Activated naive CD4-positive, alpha-beta T cell treated with anti-CD3 and anti-CD28 coated beads for 36 hours (primary cell): ENCODE measurements at regions of chr5 and their contacts with region 1.

Region 1: GRCh38 chr5:134370871-134371833 is at the start of gene UBE2B:
- DNase-seq: peak; percentile 99
- H3K4me3 Mint-ChIP-seq: peak within 1 kb of the TSS; percentile 98
- H3K27ac Mint-ChIP-seq: peak within 1 kb of the TSS; percentile 99
- H3K4me1 Mint-ChIP-seq: peaks cover 58% of the 10 kb centered on the region
- H3K27me3 Mint-ChIP-seq: no peaks in the 10 kb centered on the region
- total RNA-seq, gene UBE2B: 116 to 129 TPM

Region 2: DNA sequence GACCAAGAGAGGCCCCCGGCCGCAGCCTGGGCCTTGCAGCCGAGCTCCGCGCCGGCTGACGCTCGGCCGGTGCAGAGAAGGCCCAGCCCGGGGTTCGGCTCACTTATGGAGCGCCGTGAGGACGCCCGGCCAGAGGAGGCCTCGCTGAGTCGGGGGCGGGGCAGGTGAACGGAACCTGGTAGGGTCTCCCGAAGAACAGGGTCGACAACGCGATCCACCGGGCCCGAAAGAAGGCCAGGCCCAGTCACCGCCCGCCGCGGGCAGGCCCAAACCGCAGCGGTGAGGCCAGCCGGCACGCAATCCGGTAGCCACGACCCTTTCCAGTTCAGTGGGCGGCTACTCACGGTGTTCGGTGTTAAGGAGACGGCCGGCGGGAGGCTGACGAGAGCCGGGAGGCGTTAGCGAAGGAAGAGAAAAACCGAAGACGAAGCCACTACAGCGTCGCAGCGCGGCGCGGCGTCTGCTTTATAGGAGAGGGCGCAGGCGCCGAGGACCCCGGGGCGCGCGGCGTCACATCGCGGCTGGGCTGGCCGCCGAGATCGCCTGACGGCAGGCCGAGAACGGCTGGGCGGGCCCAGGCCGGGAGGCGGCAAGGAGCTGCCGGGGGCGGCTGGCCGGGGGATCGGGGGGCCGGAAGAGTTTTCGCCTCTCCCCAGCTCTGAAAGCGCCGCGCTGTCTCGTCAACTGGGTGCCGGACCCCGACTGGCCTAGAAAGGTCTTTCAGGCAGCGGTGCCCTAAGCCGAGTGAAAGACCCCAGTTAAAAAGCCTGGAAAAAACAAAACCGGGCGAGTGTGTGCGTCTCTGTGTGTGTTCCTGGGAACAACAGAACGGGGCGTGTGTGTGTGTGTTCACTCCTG is 194.4 kb before region 1 on chr5 and contains the start of gene SKP1:
- CTCF ChIA-PET with region 1: no interaction called
- intact Hi-C with region 1: loop called (anchors 1 kb)
- DNase-seq: peak; percentile 83
- H3K4me3 Mint-ChIP-seq: peak within 1 kb of the TSS; percentile 96
- H3K27ac Mint-ChIP-seq: peak within 1 kb of the TSS; percentile 94
- H3K4me1 Mint-ChIP-seq: peaks cover 31% of the 10 kb centered on the region
- H3K27me3 Mint-ChIP-seq: no peaks in the 10 kb centered on the region
- total RNA-seq, gene SKP1: 307 to 309 TPM

Region 3: DNA sequence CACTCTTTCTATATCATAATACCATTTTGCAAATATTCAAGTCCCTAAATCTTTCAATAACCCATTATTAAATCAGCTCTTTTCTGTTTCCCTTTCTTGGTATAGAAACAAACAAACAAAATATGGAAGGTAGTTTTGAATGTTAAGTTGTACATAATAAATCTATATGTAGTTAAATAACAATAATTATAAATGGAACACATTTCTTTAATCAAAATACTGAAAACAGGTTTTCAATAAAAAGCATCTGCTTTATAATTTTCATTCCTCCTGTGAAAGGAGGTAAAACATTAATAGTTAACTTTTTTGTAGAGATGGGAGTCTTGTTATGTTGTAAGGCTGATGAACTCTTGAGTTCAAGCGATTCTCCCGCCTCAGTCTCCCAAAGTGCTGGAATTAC is 58.4 kb before region 1 on chr5:
- CTCF ChIA-PET with region 1: no interaction called
- intact Hi-C with region 1: no loop called
- DNase-seq: no peak
- H3K4me3 Mint-ChIP-seq: no peak overlapping the region
- H3K27ac Mint-ChIP-seq: no peak overlapping the region
- H3K4me1 Mint-ChIP-seq: peaks cover 6% of the 10 kb centered on the region
- H3K27me3 Mint-ChIP-seq: no peaks in the 10 kb centered on the region

Region 4: DNA sequence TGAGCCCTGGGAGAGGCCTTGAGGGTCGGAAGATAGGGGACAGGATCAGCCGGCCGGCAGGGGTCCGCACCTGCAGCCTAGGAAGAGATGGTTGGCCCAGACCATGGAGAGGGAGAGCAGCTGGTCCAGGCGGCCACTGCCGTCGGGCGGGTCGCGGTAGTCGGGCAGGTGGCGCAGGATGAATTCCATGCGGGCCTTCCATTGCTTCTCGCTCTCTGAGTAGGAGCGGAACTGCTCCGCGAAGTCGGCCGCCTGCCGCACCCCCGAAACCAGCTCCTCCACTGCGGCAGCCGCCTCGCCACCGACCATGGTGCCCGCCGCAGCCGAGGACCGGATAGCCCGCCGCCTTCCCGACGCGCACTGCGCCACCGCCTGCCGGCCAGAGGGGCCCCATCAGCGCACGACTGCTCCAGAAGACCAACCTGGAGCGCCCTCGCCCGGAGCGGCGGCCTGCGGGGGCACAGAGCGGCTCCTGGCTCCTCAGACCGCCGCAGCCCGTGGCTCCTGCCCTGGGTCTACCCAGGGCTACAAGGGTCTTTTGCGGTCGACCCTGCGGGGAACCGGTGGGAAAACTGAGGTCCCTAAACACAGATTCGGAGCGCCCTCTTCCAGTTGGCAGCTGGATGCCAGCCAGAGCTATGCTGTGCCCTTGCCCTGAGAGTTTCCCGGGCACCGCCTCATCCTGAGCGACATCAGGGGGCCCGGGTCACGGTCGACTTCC is 40.6 kb after region 1 on chr5 and contains the start of gene CDKN2AIPNL:
- CTCF ChIA-PET with region 1: interaction called, 8 read pairs
- intact Hi-C with region 1: loop called (anchors 1 kb)
- DNase-seq: peak; percentile 94
- H3K4me3 Mint-ChIP-seq: peak within 1 kb of the TSS; percentile 96
- H3K27ac Mint-ChIP-seq: peak within 1 kb of the TSS; percentile 88
- H3K4me1 Mint-ChIP-seq: peaks cover 34% of the 10 kb centered on the region
- H3K27me3 Mint-ChIP-seq: no peaks in the 10 kb centered on the region
- total RNA-seq, gene CDKN2AIPNL: 31.1 to 31.5 TPM

Region 5: DNA sequence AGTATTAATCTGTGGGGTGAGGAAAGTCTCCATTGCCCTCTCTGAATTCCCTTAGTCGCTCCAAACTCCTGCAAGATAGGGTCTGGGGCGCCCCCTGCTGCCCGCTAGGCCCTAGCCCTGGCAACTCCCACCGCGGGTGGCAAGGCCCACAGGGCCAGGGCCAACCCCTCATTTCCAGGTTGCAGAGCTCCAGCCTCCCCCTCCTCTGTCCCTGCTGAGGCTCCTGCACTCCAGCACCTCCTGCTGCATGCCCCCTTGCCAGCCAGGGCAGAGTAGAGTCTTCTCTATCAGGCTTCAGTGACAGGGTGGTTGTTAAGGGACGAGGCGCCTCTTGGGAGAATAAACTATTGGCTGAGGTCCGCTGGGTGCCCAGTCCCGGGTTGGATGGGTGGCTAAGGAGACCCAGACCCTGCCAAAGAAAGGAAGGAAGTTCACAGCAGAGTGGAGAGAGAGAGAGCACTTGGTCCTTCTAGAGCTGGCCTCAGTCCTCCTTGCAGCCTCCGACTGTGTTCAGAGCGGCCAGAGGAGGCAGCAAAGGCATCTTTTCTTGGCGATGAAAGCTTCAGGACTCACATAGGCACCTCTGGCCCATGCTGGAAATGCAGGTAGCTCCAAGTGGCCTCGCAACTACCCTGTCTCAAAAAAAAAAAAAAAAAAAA is 215.8 kb after region 1 on chr5:
- CTCF ChIA-PET with region 1: interaction called, 6 read pairs
- intact Hi-C with region 1: loop called (anchors 2 kb)
- DNase-seq: peak; percentile 94
- H3K4me3 Mint-ChIP-seq: no peak overlapping the region
- H3K27ac Mint-ChIP-seq: no peak overlapping the region
- H3K4me1 Mint-ChIP-seq: peaks cover 13% of the 10 kb centered on the region
- H3K27me3 Mint-ChIP-seq: no peaks in the 10 kb centered on the region

Region 6: DNA sequence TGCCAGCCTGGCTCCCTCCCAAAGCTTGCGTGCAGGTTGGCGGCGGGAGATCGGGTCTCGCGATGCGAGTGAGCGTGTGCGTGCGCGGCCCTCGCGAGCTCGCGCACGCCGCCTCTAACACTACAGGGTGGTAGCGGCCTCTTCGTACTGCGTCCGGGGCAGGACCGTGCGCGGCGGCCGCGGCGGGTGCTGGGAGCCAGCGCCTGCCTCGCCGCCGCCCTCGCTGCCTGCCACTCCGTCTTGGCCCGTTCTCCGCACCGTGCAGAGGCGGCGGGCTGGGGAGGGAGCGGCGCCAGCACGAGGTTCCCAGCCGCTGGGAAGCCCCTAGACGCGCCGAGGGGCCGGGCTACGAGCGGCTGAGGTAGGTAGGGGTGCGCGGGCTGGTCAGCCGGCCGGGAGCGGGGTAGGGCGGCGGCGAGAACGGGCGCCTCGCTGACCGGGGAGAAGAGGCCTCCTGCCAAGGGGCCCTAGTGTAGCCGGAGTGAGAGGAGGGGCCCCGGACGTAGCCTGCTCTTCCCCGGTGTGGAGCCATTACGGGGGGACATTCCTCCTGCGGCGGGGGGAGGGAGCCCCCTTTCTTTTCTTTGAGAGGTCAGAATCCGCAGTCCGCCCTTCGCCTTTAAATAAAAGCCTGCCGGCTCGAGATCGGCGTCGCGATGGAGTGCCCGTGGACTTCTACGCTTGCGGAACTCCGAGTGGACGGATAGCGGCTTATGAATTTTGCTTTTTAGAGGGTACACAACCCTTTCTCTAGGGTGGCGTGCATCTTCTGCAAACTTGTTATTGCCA is 474.9 kb after region 1 on chr5 and contains the start of gene C5orf24:
- CTCF ChIA-PET with region 1: no interaction called
- intact Hi-C with region 1: loop called (anchors 10 kb)
- DNase-seq: peak; percentile 96
- H3K4me3 Mint-ChIP-seq: peak within 1 kb of the TSS; percentile 88
- H3K27ac Mint-ChIP-seq: peak within 1 kb of the TSS; percentile 97
- H3K4me1 Mint-ChIP-seq: peaks cover 32% of the 10 kb centered on the region
- H3K27me3 Mint-ChIP-seq: no peaks in the 10 kb centered on the region
- total RNA-seq, gene C5orf24: 17.6 to 21.2 TPM